A673 (cell line): ENCODE measurements at regions of chr9 and their contacts with region 1.

Region 1: DNA sequence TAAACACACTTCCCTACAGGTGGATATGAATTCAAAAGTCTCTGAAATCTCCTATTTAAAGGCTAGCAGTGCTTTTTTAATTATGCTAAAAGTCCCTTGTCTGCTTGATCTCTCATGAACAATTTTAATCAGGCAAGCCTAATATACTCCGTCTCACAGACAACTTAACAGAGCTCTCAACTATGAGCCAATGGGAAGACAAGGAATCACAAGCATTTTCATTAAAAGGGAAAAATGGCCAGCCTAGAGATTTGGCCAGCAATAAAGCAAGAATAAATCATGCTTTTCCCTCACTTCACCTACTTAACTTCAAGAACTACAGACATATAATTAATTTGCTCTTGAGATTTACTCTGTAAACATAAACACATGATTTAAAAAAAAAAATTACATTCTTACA is 78.0 kb downstream of the RFX3 start:
- DNase-seq: no peak
- H3K4me3 ChIP-seq: no peak overlapping the region
- H3K27ac ChIP-seq: no peak overlapping the region
- H3K4me1 ChIP-seq: no peaks in the 10 kb centered on the region
- H3K27me3 ChIP-seq: no peaks in the 10 kb centered on the region
- CTCF ChIP-seq: no peak

Region 2: DNA sequence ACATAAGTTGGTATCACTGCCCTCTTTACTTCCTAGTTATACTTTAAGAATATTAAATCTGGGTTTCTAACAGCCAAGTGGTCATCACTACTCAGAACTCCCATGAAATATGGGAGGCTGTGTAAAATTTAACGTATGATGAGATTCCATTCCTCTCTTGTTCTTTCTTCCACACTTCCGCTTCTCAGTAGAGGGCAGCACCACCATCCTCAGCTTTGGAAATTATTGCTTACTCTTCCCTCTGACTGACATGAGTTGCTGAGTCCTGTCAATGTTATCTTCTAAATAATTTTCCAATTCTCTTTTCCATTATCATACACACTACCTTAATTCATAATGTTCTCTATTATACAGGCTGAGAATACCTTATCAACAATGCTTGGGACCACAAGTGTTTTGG is 116.0 kb before region 1 on chr9:
- CTCF ChIA-PET with region 1: no interaction called
- POLR2A ChIA-PET with region 1: no interaction called
- intact Hi-C with region 1: loop called (anchors 5 kb)
- DNase-seq: peak; percentile 55
- H3K4me3 ChIP-seq: no peak overlapping the region
- H3K27ac ChIP-seq: no peak overlapping the region
- H3K4me1 ChIP-seq: no peaks in the 10 kb centered on the region
- H3K27me3 ChIP-seq: no peaks in the 10 kb centered on the region
- CTCF ChIP-seq: peak; percentile 74